A673 (cell line): ENCODE measurements at regions of chr22 and their contacts with region 1.

Region 1: DNA sequence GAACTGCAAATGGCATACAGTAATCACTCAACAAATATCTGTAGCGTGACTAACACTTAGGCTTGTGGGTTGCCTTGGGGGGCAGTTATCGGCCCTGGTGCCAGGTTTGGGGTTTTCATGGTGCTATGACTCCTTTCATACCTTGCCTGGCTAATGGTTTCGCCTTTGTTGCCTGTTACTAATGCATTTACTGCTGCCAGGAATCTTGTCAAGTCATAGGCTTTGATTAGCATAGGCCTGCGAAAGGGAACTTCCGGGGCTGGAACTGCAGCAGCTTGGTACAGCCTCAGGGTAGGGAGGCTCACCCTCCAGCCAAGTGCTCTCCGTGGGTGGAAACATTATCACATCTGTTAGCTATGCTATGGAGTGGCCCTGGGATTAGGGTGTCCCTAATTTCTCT is 13.2 kb downstream of the SLC25A18 start:
- DNase-seq: peak; percentile 92
- H3K4me3 ChIP-seq: no peak overlapping the region
- H3K27ac ChIP-seq: peak overlapping the region; percentile 71
- H3K4me1 ChIP-seq: peaks cover 28% of the 10 kb centered on the region
- H3K27me3 ChIP-seq: no peaks in the 10 kb centered on the region
- CTCF ChIP-seq: no peak

Region 2: GRCh38 chr22:17597217-17597616 is 20.7 kb after region 1 on chr22:
- CTCF ChIA-PET with region 1: no interaction called
- POLR2A ChIA-PET with region 1: no interaction called
- intact Hi-C with region 1: no loop called
- DNase-seq: no peak
- H3K4me3 ChIP-seq: no peak overlapping the region
- H3K27ac ChIP-seq: no peak overlapping the region
- H3K4me1 ChIP-seq: no peaks in the 10 kb centered on the region
- H3K27me3 ChIP-seq: no peaks in the 10 kb centered on the region
- CTCF ChIP-seq: no peak

Region 3: GRCh38 chr22:17706018-17706900 is 129.8 kb after region 1 on chr22:
- CTCF ChIA-PET with region 1: no interaction called
- POLR2A ChIA-PET with region 1: no interaction called
- intact Hi-C with region 1: loop called (anchors 5 kb)
- DNase-seq: peak; percentile 86
- H3K4me3 ChIP-seq: peak overlapping the region; percentile 24
- H3K27ac ChIP-seq: peak overlapping the region; percentile 75
- H3K4me1 ChIP-seq: peaks cover 18% of the 10 kb centered on the region
- H3K27me3 ChIP-seq: no peaks in the 10 kb centered on the region
- CTCF ChIP-seq: no peak